Caco-2 (cell line): ENCODE measurements at regions of chr13 and their contacts with region 1.

Region 1: GRCh38 chr13:75102001-75102716 is 379.8 kb downstream of the TBC1D4 start:
- DNase-seq: no peak
- H3K4me3 ChIP-seq: no peak overlapping the region
- H3K4me3 Mint-ChIP-seq: no peak overlapping the region
- H3K27ac Mint-ChIP-seq: no peak overlapping the region
- H3K4me1 ChIP-seq: no peaks in the 10 kb centered on the region
- H3K4me1 Mint-ChIP-seq: no peaks in the 10 kb centered on the region
- H3K27me3 ChIP-seq: no peaks in the 10 kb centered on the region
- H3K27me3 Mint-ChIP-seq: peaks cover 11% of the 10 kb centered on the region
- CTCF ChIP-seq: no peak

Region 2: DNA sequence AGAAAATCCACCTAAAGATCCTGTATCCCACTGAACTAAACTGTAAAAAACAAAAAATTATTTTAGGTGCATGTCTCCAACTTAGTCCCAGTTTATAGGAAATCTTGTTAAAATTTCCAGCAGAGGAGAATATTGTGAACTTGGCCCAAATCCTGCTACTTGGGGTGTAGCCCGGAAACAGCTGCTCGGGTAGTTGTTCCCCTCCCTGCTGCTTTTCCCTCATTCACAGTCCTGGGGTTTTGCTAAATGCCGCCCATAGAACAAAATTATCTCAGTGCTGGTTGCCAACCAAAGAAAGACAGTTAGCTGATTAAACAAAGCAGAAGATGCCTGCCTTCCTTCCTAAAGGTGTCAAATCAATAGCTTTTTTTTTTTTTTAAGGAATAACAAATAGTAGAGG is 637.5 kb before region 1 on chr13:
- CTCF ChIA-PET with region 1: no interaction called
- POLR2A ChIA-PET with region 1: no interaction called
- intact Hi-C with region 1: no loop called
- DNase-seq: no peak
- H3K4me3 ChIP-seq: no peak overlapping the region
- H3K4me3 Mint-ChIP-seq: no peak overlapping the region
- H3K27ac Mint-ChIP-seq: no peak overlapping the region
- H3K4me1 ChIP-seq: no peaks in the 10 kb centered on the region
- H3K4me1 Mint-ChIP-seq: no peaks in the 10 kb centered on the region
- H3K27me3 ChIP-seq: no peaks in the 10 kb centered on the region; the same call in 1 of the 2 replicates
- H3K27me3 Mint-ChIP-seq: peaks cover 27% of the 10 kb centered on the region
- CTCF ChIP-seq: no peak

Region 3: GRCh38 chr13:74819549-74819948 is 282.6 kb before region 1 on chr13:
- CTCF ChIA-PET with region 1: no interaction called
- POLR2A ChIA-PET with region 1: no interaction called
- intact Hi-C with region 1: no loop called
- DNase-seq: no peak
- H3K4me3 ChIP-seq: no peak overlapping the region
- H3K4me3 Mint-ChIP-seq: no peak overlapping the region
- H3K27ac Mint-ChIP-seq: no peak overlapping the region
- H3K4me1 ChIP-seq: no peaks in the 10 kb centered on the region
- H3K4me1 Mint-ChIP-seq: no peaks in the 10 kb centered on the region
- H3K27me3 ChIP-seq: no peaks in the 10 kb centered on the region
- H3K27me3 Mint-ChIP-seq: no peaks in the 10 kb centered on the region
- CTCF ChIP-seq: no peak

Region 4: GRCh38 chr13:75050419-75051046 is 51.6 kb before region 1 on chr13:
- CTCF ChIA-PET with region 1: no interaction called
- POLR2A ChIA-PET with region 1: no interaction called
- intact Hi-C with region 1: no loop called
- DNase-seq: no peak
- H3K4me3 ChIP-seq: no peak overlapping the region
- H3K4me3 Mint-ChIP-seq: no peak overlapping the region
- H3K27ac Mint-ChIP-seq: no peak overlapping the region
- H3K4me1 ChIP-seq: no peaks in the 10 kb centered on the region
- H3K4me1 Mint-ChIP-seq: no peaks in the 10 kb centered on the region
- H3K27me3 ChIP-seq: no peaks in the 10 kb centered on the region
- H3K27me3 Mint-ChIP-seq: peaks cover 7% of the 10 kb centered on the region
- CTCF ChIP-seq: no peak

Region 5: GRCh38 chr13:75353781-75354193 is 251.6 kb after region 1 on chr13:
- CTCF ChIA-PET with region 1: no interaction called
- POLR2A ChIA-PET with region 1: no interaction called
- intact Hi-C with region 1: no loop called
- DNase-seq: no peak
- H3K4me3 ChIP-seq: no peak overlapping the region
- H3K4me3 Mint-ChIP-seq: no peak overlapping the region
- H3K27ac Mint-ChIP-seq: peak overlapping the region; percentile 16
- H3K4me1 ChIP-seq: peaks cover 33% of the 10 kb centered on the region
- H3K4me1 Mint-ChIP-seq: peaks cover 43% of the 10 kb centered on the region
- H3K27me3 ChIP-seq: no peaks in the 10 kb centered on the region
- H3K27me3 Mint-ChIP-seq: no peaks in the 10 kb centered on the region
- CTCF ChIP-seq: no peak

Region 6: DNA sequence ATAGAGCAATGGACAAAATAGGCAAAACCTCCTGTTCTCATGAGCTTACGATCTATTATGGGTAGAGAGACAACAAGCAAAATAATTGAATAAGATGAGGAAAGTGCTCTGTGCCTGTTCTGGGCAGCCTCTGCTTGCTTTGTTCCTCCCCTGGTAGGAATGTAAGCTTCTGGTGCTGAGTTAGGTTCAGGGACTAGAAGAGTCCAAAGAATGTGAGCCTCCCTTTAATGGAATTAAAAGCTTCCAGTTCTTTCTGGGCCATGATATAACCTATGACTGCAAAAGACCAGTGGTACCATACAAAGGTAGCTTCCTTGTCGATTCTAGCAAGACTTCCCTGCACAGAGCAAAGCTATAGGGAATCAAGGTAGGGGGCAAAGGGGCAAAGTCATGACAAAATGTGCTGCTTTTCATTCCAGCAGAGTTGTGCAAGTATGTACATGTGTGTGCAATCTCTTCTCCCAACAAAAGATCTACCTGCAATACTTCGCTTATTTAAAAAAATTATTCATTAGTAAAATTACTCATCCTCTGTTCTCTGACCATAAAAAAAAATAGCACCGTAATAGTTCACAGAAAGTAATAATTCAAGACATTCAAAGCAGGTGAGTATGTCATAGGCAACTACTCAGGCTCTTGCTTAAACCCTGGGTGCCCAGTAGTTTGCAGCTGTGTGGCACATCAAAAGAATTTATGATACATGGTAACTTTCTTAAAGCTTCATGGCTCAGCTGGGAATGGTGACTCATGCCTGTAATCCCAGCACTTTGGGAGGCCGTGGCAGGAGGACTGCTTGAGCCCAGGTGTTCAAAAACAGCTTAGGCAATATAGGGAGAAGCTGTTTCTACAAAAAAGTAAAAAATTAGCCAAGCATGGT is 1867.6 kb after region 1 on chr13:
- CTCF ChIA-PET with region 1: interaction called, 20 read pairs
- POLR2A ChIA-PET with region 1: no interaction called
- intact Hi-C with region 1: no loop called
- DNase-seq: peak in 1 of 2 experiments; percentile 18
- H3K4me3 ChIP-seq: no peak overlapping the region
- H3K4me3 Mint-ChIP-seq: no peak overlapping the region
- H3K27ac Mint-ChIP-seq: no peak overlapping the region
- H3K4me1 ChIP-seq: peaks cover 50% of the 10 kb centered on the region
- H3K4me1 Mint-ChIP-seq: peaks cover 21% of the 10 kb centered on the region
- H3K27me3 ChIP-seq: no peaks in the 10 kb centered on the region
- H3K27me3 Mint-ChIP-seq: no peaks in the 10 kb centered on the region
- CTCF ChIP-seq: no peak